Mammary epithelial cell (primary cell): ENCODE measurements at regions of chr10 and their contacts with region 1.

Region 1: GRCh38 chr10:115355162-115355760 is 262.1 kb downstream of the ATRNL1 start:
- DNase-seq: peak; percentile 50
- H3K4me3 ChIP-seq: no peak overlapping the region
- H3K27ac ChIP-seq: no peak overlapping the region
- H3K4me1 ChIP-seq: no peaks in the 10 kb centered on the region
- H3K27me3 ChIP-seq: no peaks in the 10 kb centered on the region
- CTCF ChIP-seq: peak; percentile 70 to 89

Region 2: GRCh38 chr10:115171392-115171960 is 183.8 kb before region 1 on chr10:
- CTCF ChIA-PET with region 1: no interaction called
- dilution Hi-C with region 1: no loop called
- in situ Hi-C with region 1: no loop called
- intact Hi-C with region 1: loop called (anchors 1 kb)
- DNase-seq: no peak
- H3K4me3 ChIP-seq: no peak overlapping the region
- H3K27ac ChIP-seq: no peak overlapping the region
- H3K4me1 ChIP-seq: no peaks in the 10 kb centered on the region
- H3K27me3 ChIP-seq: peaks cover 2% of the 10 kb centered on the region
- CTCF ChIP-seq: peak; percentile 38 to 44

Region 3: GRCh38 chr10:115417585-115418265 is 62.5 kb after region 1 on chr10:
- CTCF ChIA-PET with region 1: no interaction called
- dilution Hi-C with region 1: no loop called
- in situ Hi-C with region 1: loop called in 1 of 2 experiments (anchors 5 kb)
- intact Hi-C with region 1: loop called (anchors 1 kb)
- DNase-seq: peak; percentile 45
- H3K4me3 ChIP-seq: no peak overlapping the region
- H3K27ac ChIP-seq: no peak overlapping the region
- H3K4me1 ChIP-seq: no peaks in the 10 kb centered on the region
- H3K27me3 ChIP-seq: no peaks in the 10 kb centered on the region
- CTCF ChIP-seq: peak; percentile 81 to 90

Region 4: DNA sequence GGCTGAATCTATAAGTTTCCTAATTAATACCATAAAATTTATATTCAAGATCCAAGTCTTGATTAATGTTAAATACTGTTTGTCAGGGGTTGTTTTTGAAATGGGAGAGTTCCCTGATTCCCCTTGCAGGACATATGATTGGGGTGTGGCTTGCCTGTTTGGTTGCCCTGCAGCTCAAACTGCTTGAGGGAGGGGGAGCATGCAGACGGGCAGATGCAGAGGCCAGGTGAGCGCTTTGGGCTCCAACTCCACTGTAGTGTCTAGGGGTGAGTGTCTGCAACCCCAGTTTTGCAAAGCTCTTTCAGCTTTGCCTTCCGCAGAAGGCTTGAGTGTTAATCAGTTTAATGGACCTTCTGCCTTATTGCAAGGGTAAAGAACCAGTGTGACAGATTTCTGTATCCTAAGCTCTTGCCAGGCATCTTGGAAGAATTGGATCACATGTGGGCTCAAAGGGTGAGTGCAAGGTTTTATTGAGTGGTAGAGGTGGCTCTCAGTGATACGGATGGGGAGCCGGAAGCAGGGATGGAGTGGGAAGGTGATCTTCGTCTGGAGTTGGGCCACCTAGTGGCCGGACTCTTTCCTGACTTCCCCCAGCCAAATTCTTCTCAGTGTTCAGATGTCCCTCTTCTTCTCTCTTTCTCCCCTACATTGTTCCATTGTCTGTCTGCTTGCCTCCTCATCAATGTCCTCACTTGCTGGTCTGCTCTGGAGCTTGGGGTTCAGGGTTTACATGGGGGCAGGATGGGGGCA is 217.6 kb after region 1 on chr10:
- CTCF ChIA-PET with region 1: no interaction called
- dilution Hi-C with region 1: no loop called
- in situ Hi-C with region 1: no loop called
- intact Hi-C with region 1: loop called (anchors 2 kb)
- DNase-seq: peak; percentile 0
- H3K4me3 ChIP-seq: no peak overlapping the region
- H3K27ac ChIP-seq: no peak overlapping the region
- H3K4me1 ChIP-seq: no peaks in the 10 kb centered on the region
- H3K27me3 ChIP-seq: no peaks in the 10 kb centered on the region
- CTCF ChIP-seq: peak; percentile 32 to 58

Region 5: GRCh38 chr10:116287906-116288501 is 932.7 kb after region 1 on chr10:
- CTCF ChIA-PET with region 1: no interaction called
- dilution Hi-C with region 1: no loop called
- in situ Hi-C with region 1: no loop called
- intact Hi-C with region 1: loop called (anchors 5 kb)
- DNase-seq: no peak
- H3K4me3 ChIP-seq: no peak overlapping the region
- H3K27ac ChIP-seq: no peak overlapping the region
- H3K4me1 ChIP-seq: no peaks in the 10 kb centered on the region
- H3K27me3 ChIP-seq: no peaks in the 10 kb centered on the region
- CTCF ChIP-seq: peak; percentile 70 to 72